Endothelial cell of umbilical vein (primary cell): ENCODE measurements at regions of chr6 and their contacts with region 1.

Region 1: DNA sequence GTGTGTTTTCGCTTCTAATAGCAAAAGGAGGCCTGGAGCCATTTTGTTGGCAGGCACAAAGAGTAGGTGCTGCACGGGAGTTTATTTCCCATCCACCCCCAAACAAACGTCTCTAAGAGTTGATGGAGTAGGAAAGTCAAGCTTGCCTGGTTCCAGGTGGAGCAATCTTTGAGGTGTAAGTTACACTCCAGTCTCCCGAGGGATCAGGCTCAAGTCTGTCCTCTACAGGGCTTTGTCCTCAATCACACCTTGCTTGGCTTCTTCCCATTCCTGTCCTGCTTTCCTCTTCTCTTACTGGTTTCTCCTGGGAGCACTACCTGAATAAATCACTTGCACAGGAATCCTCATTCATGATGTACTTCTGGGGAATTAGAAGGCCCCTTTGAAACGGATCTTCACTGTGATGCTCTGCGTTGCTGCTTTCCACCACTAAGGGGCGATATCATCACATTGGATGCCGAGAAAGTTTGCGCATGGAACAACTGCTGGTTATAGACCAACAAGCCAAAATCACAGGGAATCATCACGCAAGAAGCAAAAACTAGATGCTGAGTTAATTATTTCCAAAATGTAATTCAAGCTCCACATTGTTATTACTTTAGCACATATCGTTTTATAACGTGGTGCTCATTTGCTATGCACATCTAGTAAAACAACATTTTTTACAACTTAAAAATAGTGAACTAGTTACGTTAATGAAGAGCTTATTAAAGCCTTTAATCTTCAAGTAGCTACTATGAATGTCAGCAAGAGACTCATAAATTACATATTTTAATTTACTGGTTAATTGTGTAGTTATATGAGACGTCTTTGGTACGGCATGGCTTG is 156.8 kb downstream of the DNAH8 start:
- DNase-seq: peak; percentile 67
- H3K4me3 ChIP-seq: no peak overlapping the region
- H3K27ac ChIP-seq: no peak overlapping the region
- H3K4me1 ChIP-seq: no peaks in the 10 kb centered on the region
- H3K27me3 ChIP-seq: peaks cover 0 to 4% of the 10 kb centered on the region in 2 experiments
- CTCF ChIP-seq: peak; percentile 87 to 91
- POLR2A ChIP-seq: no peak

Region 2: GRCh38 chr6:38702558-38703397 is 169.2 kb before region 1 on chr6 and contains the start of gene GLO1:
- CTCF ChIA-PET with region 1: no interaction called
- POLR2A ChIA-PET with region 1: no interaction called
- dilution Hi-C with region 1: no loop called
- intact Hi-C with region 1: loop called (anchors 10 kb)
- DNase-seq: peak; percentile 99
- H3K4me3 ChIP-seq: peak within 1 kb of the TSS; percentile 48 to 80 (median 72)
- H3K27ac ChIP-seq: peak within 1 kb of the TSS; percentile 65
- H3K4me1 ChIP-seq: no peaks in the 10 kb centered on the region
- H3K27me3 ChIP-seq: no peaks in the 10 kb centered on the region
- CTCF ChIP-seq: no peak
- POLR2A ChIP-seq: peak; percentile 74
- total RNA-seq, gene GLO1: 120 and 135 TPM in 2 replicates

Region 3: GRCh38 chr6:38730140-38730862 is 141.7 kb before region 1 on chr6:
- CTCF ChIA-PET with region 1: no interaction called
- POLR2A ChIA-PET with region 1: no interaction called
- dilution Hi-C with region 1: no loop called
- intact Hi-C with region 1: no loop called
- DNase-seq: no peak
- H3K4me3 ChIP-seq: no peak overlapping the region
- H3K27ac ChIP-seq: no peak overlapping the region
- H3K4me1 ChIP-seq: peaks cover 9% of the 10 kb centered on the region
- H3K27me3 ChIP-seq: no peaks in the 10 kb centered on the region
- CTCF ChIP-seq: no peak
- POLR2A ChIP-seq: no peak

Region 4: DNA sequence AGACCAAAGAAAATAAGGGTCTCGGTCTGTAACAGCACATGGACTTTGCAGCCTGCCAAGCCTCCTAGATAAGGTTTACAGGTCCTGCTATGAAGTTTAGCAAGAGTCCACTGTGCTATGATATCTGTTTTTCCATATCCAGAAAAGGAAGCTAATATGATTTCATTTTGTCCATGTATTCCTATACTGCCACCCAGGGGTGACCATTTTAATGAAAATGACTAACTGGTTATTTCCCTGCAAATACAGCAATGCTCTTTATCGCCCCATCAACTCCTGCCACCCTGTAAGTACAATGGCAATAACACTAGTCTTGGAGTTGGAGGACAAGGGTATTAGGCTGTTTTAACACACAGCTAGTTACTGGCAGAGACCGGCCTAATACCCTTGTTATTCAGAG is 61.5 kb after region 1 on chr6:
- CTCF ChIA-PET with region 1: no interaction called
- POLR2A ChIA-PET with region 1: no interaction called
- dilution Hi-C with region 1: no loop called
- intact Hi-C with region 1: loop called (anchors 1 kb)
- DNase-seq: peak; percentile 76
- H3K4me3 ChIP-seq: no peak overlapping the region
- H3K27ac ChIP-seq: no peak overlapping the region
- H3K4me1 ChIP-seq: no peaks in the 10 kb centered on the region
- H3K27me3 ChIP-seq: peaks cover 8 to 11% of the 10 kb centered on the region in 2 experiments
- CTCF ChIP-seq: peak; percentile 17 to 27
- POLR2A ChIP-seq: no peak

Region 5: GRCh38 chr6:38973178-38974054 is 101.5 kb after region 1 on chr6:
- CTCF ChIA-PET with region 1: no interaction called
- POLR2A ChIA-PET with region 1: no interaction called
- dilution Hi-C with region 1: no loop called
- intact Hi-C with region 1: no loop called
- DNase-seq: peak; percentile 76
- H3K4me3 ChIP-seq: no peak overlapping the region
- H3K27ac ChIP-seq: no peak overlapping the region
- H3K4me1 ChIP-seq: no peaks in the 10 kb centered on the region
- H3K27me3 ChIP-seq: peaks cover 7 to 28% of the 10 kb centered on the region in 2 experiments
- CTCF ChIP-seq: peak; percentile 24 to 46
- POLR2A ChIP-seq: no peak

Region 6: DNA sequence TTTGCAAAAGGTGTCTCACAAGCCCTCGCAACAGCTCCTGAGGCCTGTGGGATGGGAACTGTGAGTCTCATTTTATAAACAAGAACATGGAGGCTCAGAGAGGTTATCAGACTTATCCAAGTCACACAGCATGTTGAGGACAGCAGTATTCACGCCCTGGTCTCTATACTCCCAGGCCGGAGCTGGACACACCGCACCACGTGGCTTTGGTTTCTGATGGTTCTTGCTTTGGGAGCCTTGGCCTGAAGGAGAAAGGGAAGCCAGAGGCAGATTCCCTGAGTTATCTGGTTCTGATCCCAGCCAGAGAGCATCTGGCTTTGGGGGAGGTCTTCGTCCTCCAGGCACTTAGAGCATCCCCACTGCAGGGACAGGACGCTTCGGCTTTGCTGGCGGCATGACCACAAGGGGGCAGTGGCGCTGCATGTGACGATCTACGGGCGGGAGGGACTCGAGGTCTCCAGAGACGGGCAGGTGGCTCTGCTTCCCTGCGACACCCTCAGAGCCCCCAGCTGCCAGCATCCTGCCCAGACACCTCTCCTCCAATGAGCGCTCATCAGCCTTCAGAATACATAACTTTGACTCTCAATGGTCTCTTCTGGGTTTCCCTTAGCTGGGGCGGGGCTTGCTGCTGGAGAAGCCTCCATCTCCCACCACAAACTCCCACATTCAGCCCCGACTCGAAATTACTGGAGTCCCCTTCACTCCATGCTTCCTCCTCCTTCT is 294.4 kb after region 1 on chr6:
- CTCF ChIA-PET with region 1: interaction called, 3 read pairs
- POLR2A ChIA-PET with region 1: no interaction called
- dilution Hi-C with region 1: no loop called
- intact Hi-C with region 1: loop called (anchors 1 kb)
- DNase-seq: peak; percentile 48
- H3K4me3 ChIP-seq: no peak overlapping the region
- H3K27ac ChIP-seq: no peak overlapping the region
- H3K4me1 ChIP-seq: no peaks in the 10 kb centered on the region
- H3K27me3 ChIP-seq: no peaks in the 10 kb centered on the region
- CTCF ChIP-seq: peak; percentile 89 to 92
- POLR2A ChIP-seq: no peak

Region 7: DNA sequence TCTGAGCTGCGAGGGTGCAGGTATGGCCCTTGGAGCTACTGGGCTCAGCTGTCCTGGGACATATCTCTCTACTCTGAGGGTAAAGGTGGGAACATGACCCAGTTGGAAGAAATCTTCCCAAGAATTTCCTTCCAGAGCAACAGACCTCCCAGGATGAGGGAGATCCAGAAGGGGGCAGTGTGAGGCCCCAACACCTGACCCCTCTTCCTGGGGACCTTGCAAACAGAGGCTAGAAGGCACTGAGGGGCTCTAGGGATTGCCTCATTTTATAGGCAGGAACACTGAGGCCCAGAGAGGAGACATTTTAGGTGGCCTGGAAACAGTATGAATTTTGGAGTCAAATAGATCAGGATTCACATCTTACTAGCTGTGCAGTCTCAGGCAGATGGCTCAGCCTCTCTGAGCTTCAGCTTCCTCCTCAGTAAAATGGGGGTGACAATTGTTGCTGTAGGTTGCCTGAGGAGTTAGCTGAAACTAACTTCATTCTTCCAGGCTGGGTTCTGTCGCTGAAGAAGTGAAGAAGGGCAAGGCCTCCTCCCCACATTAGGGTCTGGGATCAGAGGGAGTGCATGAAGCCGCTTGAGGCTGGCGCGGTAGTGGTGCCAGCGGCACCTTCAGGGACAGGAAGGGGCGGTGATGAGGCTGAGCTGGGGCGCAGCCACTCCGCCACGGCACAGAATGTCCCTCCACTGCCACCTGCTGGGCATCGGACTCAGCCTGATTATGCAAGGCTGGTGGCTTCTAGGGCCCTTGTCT is 430.9 kb after region 1 on chr6:
- CTCF ChIA-PET with region 1: interaction called, 47 read pairs
- POLR2A ChIA-PET with region 1: no interaction called
- dilution Hi-C with region 1: no loop called
- intact Hi-C with region 1: loop called (anchors 1 kb)
- DNase-seq: peak; percentile 63
- H3K4me3 ChIP-seq: no peak overlapping the region
- H3K27ac ChIP-seq: no peak overlapping the region
- H3K4me1 ChIP-seq: no peaks in the 10 kb centered on the region
- H3K27me3 ChIP-seq: no peaks in the 10 kb centered on the region
- CTCF ChIP-seq: peak; percentile 76 to 90
- POLR2A ChIP-seq: no peak

Region 8: GRCh38 chr6:39309942-39310531 is 438.1 kb after region 1 on chr6:
- CTCF ChIA-PET with region 1: interaction called, 11 read pairs
- POLR2A ChIA-PET with region 1: no interaction called
- dilution Hi-C with region 1: no loop called
- intact Hi-C with region 1: loop called (anchors 1 kb)
- DNase-seq: peak; percentile 55
- H3K4me3 ChIP-seq: no peak overlapping the region
- H3K27ac ChIP-seq: no peak overlapping the region
- H3K4me1 ChIP-seq: no peaks in the 10 kb centered on the region
- H3K27me3 ChIP-seq: peaks cover 19 to 24% of the 10 kb centered on the region in 2 experiments
- CTCF ChIP-seq: peak; percentile 80 to 90
- POLR2A ChIP-seq: no peak

Region 9: DNA sequence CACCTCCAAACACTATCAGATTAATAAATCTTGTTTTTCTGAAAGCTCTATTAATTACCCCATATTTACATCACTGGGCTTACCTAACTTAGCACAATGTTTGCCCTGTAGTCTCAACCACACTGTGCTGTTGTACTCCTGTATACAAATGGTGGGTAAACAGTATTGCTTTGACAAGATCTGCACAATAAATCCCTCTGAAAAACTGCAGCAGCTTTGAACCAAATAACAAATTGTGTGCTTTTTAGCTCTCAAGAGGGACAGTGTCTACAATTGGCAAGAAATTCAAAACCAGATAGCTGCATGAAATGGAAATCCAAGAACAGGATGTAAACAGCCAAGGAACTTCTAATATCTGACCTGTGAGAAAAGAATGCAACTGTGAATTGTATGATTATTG is 842.8 kb after region 1 on chr6:
- CTCF ChIA-PET with region 1: no interaction called
- POLR2A ChIA-PET with region 1: no interaction called
- dilution Hi-C with region 1: no loop called
- intact Hi-C with region 1: no loop called
- DNase-seq: no peak
- H3K4me3 ChIP-seq: no peak overlapping the region
- H3K27ac ChIP-seq: no peak overlapping the region
- H3K4me1 ChIP-seq: no peaks in the 10 kb centered on the region
- H3K27me3 ChIP-seq: no peaks in the 10 kb centered on the region
- CTCF ChIP-seq: no peak
- POLR2A ChIP-seq: no peak

Region 10: DNA sequence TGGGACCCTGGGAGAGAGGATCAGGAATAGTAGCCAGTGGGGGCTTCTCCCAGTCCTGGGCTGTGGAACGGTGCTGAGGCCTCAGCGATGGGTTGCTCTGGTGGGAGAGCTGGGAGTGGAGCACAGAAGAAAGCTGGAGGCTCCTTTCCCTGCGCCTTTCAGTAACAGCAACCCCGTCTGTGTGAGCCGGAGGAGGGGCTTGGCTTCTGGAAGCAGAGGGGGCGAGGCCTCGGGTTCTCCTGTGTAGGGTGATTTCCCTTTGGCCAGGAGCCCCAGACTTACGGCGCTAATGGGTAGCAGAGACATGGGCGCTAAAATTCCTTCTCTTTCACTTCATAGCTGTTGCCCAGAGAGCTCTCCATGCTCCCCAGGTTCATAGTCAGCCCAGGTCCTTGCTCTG is 975.3 kb after region 1 on chr6:
- CTCF ChIA-PET with region 1: no interaction called
- POLR2A ChIA-PET with region 1: no interaction called
- dilution Hi-C with region 1: no loop called
- intact Hi-C with region 1: no loop called
- DNase-seq: no peak
- H3K4me3 ChIP-seq: no peak overlapping the region
- H3K27ac ChIP-seq: no peak overlapping the region
- H3K4me1 ChIP-seq: no peaks in the 10 kb centered on the region
- H3K27me3 ChIP-seq: no peaks in the 10 kb centered on the region
- CTCF ChIP-seq: no peak
- POLR2A ChIP-seq: no peak